ENCODE measurements at regions of chr9 and their contacts with region 1.

Region 1: DNA sequence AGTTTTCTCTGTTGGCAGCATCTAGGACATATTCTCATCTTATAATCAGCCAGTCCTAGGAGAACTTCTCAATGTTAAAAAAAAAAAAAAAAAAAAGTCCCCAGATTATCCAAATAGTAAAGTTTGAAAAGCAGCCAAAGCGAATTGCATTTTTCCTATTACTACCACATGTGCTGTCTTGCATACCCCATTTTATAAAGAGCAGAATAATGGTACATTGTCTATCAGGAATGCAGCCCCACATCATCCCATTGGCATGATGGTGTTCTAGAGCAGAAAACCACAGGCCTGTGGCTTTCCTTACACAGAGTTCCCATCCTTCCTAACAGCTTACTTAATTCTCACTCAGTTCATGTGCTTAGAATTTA is 381.6 kb downstream of the TMEM38B start:
- DNase-seq: no peak
- ATAC-seq: no peak
- H3K4me3 ChIP-seq: no peak overlapping the region
- H3K27ac ChIP-seq: no peak overlapping the region
- H3K4me1 ChIP-seq: peaks cover 0 to 12% (median 0%) of the 10 kb centered on the region in 12 donors
- H3K27me3 ChIP-seq: no peaks in the 10 kb centered on the region
- CTCF ChIP-seq: no peak
- POLR2A ChIP-seq: no peak

Region 2: DNA sequence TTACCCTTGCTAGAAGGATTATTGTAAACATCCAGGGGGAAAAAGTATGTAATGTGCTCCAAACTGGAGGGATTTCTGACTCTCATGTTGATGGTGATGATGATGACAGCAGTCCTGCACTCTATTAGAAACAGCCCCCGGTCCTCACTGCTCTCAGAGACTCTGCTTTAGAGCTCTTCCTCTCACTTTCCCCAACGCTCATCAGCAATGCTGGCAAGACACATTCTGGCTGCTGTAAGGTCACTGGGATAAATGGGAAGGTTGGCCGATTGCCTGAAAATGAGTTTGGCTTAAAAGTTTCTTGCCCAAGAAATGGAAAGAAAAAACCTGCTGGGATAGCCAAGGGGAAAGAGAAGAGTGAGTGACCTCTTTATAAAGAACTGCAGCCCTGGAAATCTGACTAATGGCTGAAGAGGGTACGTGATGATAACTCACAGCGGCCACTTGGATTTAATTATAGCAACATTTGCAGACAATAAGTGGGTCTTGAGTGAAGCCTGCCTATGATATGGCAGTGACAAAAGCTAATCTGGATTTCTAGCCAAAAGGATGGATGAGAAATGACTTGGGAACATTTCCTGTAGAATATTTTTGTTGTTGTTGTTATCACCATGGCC is 145.8 kb before region 1 on chr9:
- intact Hi-C with region 1: loop called in 2 of 10 experiments (anchors 2 to 10 kb)
- DNase-seq: peak in 4 of 5 donors; percentile 16 to 67 (median 36)
- ATAC-seq: peak; percentile 62 to 96 (median 90)
- H3K4me3 ChIP-seq: no peak overlapping the region
- H3K27ac ChIP-seq: peak overlapping the region in 9 of 12 donors; percentile 38 to 71 (median 49)
- H3K4me1 ChIP-seq: peaks cover 0 to 12% (median 0%) of the 10 kb centered on the region in 12 donors
- H3K27me3 ChIP-seq: no peaks in the 10 kb centered on the region
- CTCF ChIP-seq: no peak
- POLR2A ChIP-seq: no peak

Region 3: DNA sequence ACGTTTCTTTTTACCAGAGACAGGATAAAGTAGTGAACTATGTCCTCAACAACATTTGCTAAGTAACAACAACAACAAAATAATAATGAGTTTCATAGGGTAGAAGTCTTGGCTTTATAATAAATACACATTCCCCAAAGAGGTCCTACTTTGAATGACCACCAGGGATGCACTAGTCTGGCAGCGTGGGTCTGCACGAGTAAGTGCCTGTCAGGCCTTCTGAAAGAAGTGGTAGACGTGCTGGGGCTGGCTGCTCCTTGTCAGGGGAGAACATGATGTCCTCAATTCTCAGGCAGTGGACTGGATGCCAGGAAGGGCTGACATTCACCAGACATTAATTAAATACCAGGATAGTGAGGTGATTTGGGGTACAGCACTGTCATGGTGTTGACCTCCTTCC is 50.5 kb before region 1 on chr9:
- intact Hi-C with region 1: loop called in 2 of 10 experiments (anchors 5 to 10 kb)
- DNase-seq: peak; percentile 24 to 86 (median 70)
- ATAC-seq: peak; percentile 85 to 99 (median 98)
- H3K4me3 ChIP-seq: no peak overlapping the region
- H3K27ac ChIP-seq: peak overlapping the region in 2 of 12 donors; percentile 31 to 33
- H3K4me1 ChIP-seq: peaks cover 0 to 13% (median 0%) of the 10 kb centered on the region in 12 donors
- H3K27me3 ChIP-seq: no peaks in the 10 kb centered on the region
- CTCF ChIP-seq: peak in 9 of 12 donors; percentile 13 to 53 (median 20)
- POLR2A ChIP-seq: no peak

Region 4: GRCh38 chr9:106032978-106033377 is 43.0 kb before region 1 on chr9:
- intact Hi-C with region 1: loop called in 2 of 10 experiments (anchors 5 to 10 kb)
- DNase-seq: no peak
- ATAC-seq: no peak
- H3K4me3 ChIP-seq: no peak overlapping the region
- H3K27ac ChIP-seq: no peak overlapping the region
- H3K4me1 ChIP-seq: no peaks in the 10 kb centered on the region
- H3K27me3 ChIP-seq: no peaks in the 10 kb centered on the region
- CTCF ChIP-seq: no peak
- POLR2A ChIP-seq: no peak

Measured in heart left ventricle (tissue), 16 donors.